ENCODE measurements at regions of chr14 and their contacts with region 1.

Region 1: GRCh38 chr14:52790756-52791202 is 628 bp downstream of the GNPNAT1 start:
- DNase-seq: no peak
- ATAC-seq: peak in 3 of 4 experiments; percentile 0 to 2 (median 0)
- H3K4me3 ChIP-seq: peak overlapping the region; percentile 75 to 94
- H3K4me3 Mint-ChIP-seq: peak overlapping the region; percentile 84 to 91 (median 90)
- H3K27ac ChIP-seq: peak overlapping the region; percentile 7
- H3K27ac Mint-ChIP-seq: peak overlapping the region; percentile 76 to 78
- H3K4me1 ChIP-seq: peaks cover 11 to 21% of the 10 kb centered on the region in 2 experiments
- H3K4me1 Mint-ChIP-seq: peaks cover 38 to 45% (median 44%) of the 10 kb centered on the region in 3 donors
- H3K27me3 ChIP-seq: no peaks in the 10 kb centered on the region
- H3K27me3 Mint-ChIP-seq: no peaks in the 10 kb centered on the region

Region 2: DNA sequence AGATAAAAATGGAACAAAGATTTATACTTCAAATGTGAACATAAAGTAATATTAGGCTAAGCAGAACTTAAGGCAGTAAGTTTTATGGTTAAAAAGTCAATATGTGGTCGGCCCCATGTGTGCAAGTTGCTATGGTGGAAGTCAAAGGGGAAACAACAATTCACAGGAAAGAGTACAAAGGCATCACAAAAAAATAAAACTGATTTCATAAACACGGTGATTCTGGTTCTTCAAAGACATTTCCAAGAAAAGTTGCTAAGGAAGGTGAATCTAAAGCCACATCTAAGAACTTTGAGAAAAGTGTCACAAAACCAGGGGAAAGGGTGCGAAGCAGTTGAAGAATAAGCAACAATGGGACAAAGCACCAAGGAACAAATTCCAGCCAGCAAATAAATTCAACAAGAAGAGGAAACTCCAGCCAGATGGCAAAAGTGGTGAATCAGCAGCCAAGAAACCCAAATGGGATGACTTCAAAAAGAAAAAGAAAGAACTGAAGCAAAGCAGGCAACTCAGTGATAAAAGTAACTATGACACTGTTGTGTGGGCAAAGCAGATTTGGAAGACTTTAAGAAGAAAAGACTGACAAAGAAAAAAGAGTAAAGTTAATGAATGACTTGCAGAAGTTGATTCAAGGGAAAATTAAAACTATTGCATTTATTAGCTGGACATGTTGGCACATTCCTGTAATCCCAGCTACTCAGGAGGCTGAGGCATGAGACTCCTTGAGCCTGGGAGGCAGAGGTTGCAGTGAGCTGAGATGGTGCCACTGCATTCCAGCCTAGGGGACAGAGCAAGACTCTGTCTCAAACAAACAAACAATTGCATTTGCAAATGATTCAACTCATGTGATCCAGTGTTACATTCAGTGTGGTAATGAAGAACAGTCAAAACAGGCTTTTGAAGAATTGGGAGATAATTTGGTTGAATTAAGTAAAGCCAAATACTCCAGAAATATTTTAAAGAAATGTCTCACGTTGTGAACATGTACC is 503.8 kb before region 1 on chr14:
- CTCF ChIA-PET with region 1: no interaction called
- POLR2A ChIA-PET with region 1: interaction called in 1 of 2 experiments, 11 read pairs
- DNase-seq: no peak
- ATAC-seq: peak; percentile 45 to 74 (median 71)
- H3K4me3 ChIP-seq: peak overlapping the region in 1 of 2 donors; percentile 6
- H3K4me3 Mint-ChIP-seq: peak overlapping the region; percentile 1 to 64 (median 4)
- H3K27ac ChIP-seq: no peak overlapping the region
- H3K27ac Mint-ChIP-seq: peak overlapping the region; percentile 52 to 69
- H3K4me1 ChIP-seq: peaks cover 19 to 27% of the 10 kb centered on the region in 2 experiments
- H3K4me1 Mint-ChIP-seq: peaks cover 33 to 45% (median 43%) of the 10 kb centered on the region in 3 donors
- H3K27me3 ChIP-seq: no peaks in the 10 kb centered on the region
- H3K27me3 Mint-ChIP-seq: no peaks in the 10 kb centered on the region

Region 3: DNA sequence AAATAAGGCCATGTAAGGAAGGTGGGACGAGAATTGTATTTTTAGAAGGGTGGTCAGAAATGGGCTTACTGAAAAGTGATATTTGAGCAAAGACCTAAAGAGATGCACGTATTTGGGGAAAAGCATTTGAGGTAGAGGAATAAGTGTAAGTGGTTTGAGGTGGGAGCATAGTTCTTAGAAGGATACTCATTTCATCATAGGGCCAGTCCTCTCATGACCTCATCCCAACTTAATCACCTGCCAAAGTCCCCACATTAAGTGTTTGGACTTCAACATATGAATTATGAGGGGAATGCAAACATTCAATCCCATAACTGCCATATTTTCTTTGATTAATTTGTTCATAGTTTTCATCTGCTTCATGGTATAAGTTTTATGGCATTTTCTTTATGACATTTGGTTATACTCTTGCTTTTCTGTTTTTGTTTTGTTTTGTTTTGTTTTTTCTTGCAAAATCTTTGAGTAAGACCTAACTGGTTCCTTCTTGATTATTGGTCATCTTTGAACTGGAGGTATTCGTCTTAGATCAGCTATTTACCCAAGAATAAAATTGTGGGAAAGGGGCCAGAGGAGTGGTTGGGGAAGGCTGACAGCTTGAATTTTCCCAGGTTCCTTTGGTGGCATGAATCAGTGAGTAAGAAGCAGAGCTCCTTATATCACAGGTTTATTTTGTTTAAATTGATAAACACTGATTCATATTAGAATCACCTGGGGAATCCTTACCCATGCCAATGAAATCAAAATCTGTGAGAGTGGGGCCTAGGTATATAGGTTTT is 23.5 kb before region 1 on chr14:
- CTCF ChIA-PET with region 1: no interaction called
- POLR2A ChIA-PET with region 1: no interaction called
- DNase-seq: no peak
- ATAC-seq: no peak
- H3K4me3 ChIP-seq: no peak overlapping the region
- H3K4me3 Mint-ChIP-seq: no peak overlapping the region
- H3K27ac ChIP-seq: no peak overlapping the region
- H3K27ac Mint-ChIP-seq: peak overlapping the region; percentile 23 to 60
- H3K4me1 ChIP-seq: peaks cover 0 to 3% of the 10 kb centered on the region in 2 experiments
- H3K4me1 Mint-ChIP-seq: peaks cover 24 to 35% (median 31%) of the 10 kb centered on the region in 3 donors
- H3K27me3 ChIP-seq: no peaks in the 10 kb centered on the region
- H3K27me3 Mint-ChIP-seq: no peaks in the 10 kb centered on the region

Region 4: DNA sequence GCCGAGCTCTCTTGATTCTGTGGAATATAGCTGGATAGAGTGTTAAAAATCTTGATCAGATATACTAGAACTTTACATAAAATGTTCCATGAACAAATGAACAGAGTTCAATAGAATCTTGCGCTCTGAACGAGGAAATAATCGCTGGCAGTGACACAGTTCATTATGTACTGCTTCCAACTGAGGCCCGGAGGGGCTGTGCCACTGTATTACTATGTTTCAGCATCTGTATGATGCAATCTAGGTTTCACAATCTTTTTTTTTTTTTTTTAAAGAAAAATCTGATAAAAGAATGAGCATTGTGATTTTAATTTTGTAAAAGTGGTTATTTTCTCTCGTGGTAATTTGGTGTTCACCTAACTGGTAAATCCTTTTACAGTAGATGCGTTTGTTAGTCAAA is 82.9 kb after region 1 on chr14:
- CTCF ChIA-PET with region 1: no interaction called
- POLR2A ChIA-PET with region 1: no interaction called
- DNase-seq: no peak
- ATAC-seq: no peak
- H3K4me3 ChIP-seq: no peak overlapping the region
- H3K4me3 Mint-ChIP-seq: no peak overlapping the region
- H3K27ac ChIP-seq: no peak overlapping the region
- H3K27ac Mint-ChIP-seq: no peak overlapping the region
- H3K4me1 ChIP-seq: no peaks in the 10 kb centered on the region
- H3K4me1 Mint-ChIP-seq: no peaks in the 10 kb centered on the region
- H3K27me3 ChIP-seq: no peaks in the 10 kb centered on the region
- H3K27me3 Mint-ChIP-seq: peaks cover 0 to 4% of the 10 kb centered on the region in 2 donors

Region 5: DNA sequence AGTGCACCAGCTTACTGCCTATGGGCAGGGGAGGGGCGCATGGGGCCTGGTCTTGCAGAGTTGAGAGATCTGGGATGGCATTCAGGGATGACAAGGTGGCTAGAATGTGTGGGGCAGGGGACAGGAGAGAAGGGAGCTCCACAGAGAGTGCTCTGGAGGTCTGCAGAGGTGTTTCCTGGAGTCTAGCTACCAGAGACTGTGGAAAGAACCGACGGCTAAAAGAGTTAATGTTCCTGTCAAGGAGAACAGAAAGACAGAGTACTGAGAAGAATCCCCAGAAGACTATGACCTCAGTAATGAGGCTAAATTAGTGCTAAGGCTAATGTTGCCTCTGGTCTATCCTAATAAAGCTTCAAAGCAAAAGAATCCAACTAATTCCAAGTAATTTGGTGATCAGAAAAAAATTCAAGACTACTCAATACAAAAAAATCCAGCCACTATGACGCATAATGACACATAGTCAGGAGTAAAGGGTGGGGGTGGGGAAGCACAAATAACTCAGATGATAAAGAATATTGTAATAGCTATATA is 115.4 kb after region 1 on chr14:
- CTCF ChIA-PET with region 1: no interaction called
- POLR2A ChIA-PET with region 1: no interaction called
- DNase-seq: no peak
- ATAC-seq: no peak
- H3K4me3 ChIP-seq: no peak overlapping the region
- H3K4me3 Mint-ChIP-seq: no peak overlapping the region
- H3K27ac ChIP-seq: no peak overlapping the region
- H3K27ac Mint-ChIP-seq: no peak overlapping the region
- H3K4me1 ChIP-seq: no peaks in the 10 kb centered on the region
- H3K4me1 Mint-ChIP-seq: no peaks in the 10 kb centered on the region
- H3K27me3 ChIP-seq: no peaks in the 10 kb centered on the region
- H3K27me3 Mint-ChIP-seq: peaks cover 4% of the 10 kb centered on the region in 2 donors

Measured in T-cell (primary cell).